A549 (cell line): ENCODE measurements at regions of chr19 and their contacts with region 1.

Region 1: DNA sequence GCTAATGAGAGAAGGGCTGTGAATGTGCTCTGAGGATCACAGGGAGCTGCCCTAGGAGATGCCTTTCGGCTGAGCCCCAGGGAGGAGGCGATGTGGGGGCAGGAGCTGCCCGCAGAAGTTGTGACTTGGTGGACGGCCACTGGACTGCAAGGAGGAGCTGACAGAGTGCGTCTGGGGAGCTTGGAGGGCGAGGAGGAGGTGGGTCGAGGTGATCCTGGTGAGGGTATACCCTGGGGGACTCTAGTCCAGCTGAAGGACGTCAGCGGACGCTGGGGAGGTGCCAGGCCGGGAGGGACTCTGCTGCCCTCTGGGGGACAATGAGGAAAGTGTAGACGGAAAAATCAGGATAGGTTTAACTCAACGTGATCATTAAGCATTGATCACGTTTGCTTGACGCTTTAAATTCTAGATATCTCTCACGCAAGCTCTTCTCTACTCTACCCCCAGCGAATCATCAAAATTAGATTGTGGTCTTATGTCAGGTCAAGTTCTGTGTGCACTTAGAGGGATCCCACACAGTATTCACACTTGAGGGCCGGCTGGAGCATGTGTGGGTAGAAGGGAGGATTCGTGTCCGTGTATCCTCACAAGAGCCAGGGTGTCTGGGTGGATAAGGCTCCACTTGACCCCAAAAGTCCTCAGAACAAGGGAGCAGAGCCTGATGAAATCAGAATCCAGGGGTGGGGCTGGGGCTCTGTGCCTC is 3.3 kb upstream of the CEACAM7 start:
- DNase-seq: peak; percentile 42 to 76
- ATAC-seq: peak; percentile 72 to 88
- H3K4me3 ChIP-seq: no peak overlapping the region
- H3K27ac ChIP-seq: no peak overlapping the region
- H3K4me1 ChIP-seq: no peaks in the 10 kb centered on the region
- CTCF ChIP-seq: peak; percentile 77
- EP300 ChIP-seq: no peak
- POLR2A ChIP-seq: no peak
- RAD21 ChIP-seq: peak; percentile 51 to 67; a peak in 4 of 5 replicates

Region 2: GRCh38 chr19:41657157-41657556 is 34.3 kb before region 1 on chr19:
- CTCF ChIA-PET with region 1: interaction called, 23 read pairs
- POLR2A ChIA-PET with region 1: no interaction called
- DNase-seq: no peak
- ATAC-seq: no peak
- H3K4me3 ChIP-seq: no peak overlapping the region
- H3K27ac ChIP-seq: no peak overlapping the region
- H3K4me1 ChIP-seq: no peaks in the 10 kb centered on the region
- CTCF ChIP-seq: no peak
- EP300 ChIP-seq: no peak
- POLR2A ChIP-seq: no peak
- RAD21 ChIP-seq: no peak

Region 3: GRCh38 chr19:41714598-41714997 is 23.2 kb after region 1 on chr19:
- CTCF ChIA-PET with region 1: interaction called, 358 read pairs
- POLR2A ChIA-PET with region 1: no interaction called
- DNase-seq: no peak
- ATAC-seq: no peak
- H3K4me3 ChIP-seq: no peak overlapping the region
- H3K27ac ChIP-seq: no peak overlapping the region
- H3K4me1 ChIP-seq: no peaks in the 10 kb centered on the region
- CTCF ChIP-seq: no peak
- EP300 ChIP-seq: no peak
- POLR2A ChIP-seq: no peak
- RAD21 ChIP-seq: no peak

Region 4: DNA sequence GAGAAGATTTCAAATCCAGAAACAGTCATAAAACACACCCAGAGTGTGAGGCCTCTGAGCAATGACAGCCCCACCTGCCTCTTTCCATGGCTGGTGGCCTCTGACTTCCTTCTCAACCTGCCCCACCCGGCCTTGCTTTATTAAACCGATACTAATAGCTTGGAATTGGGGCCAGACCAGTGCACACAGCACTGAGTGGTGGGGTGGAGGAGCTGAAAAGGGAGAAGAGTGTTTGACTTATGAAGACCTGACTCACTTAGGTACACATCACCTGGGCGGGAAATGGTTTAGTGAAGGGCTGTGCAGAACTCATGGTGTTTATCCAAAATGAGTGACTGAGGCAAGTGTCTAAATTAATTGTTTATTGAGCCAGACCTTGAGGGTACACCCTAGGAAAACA is 43.2 kb after region 1 on chr19:
- CTCF ChIA-PET with region 1: interaction called, 10 read pairs
- POLR2A ChIA-PET with region 1: no interaction called
- DNase-seq: no peak
- ATAC-seq: peak in 1 of 2 experiments; percentile 26; a peak in 2 of 6 replicates
- H3K4me3 ChIP-seq: no peak overlapping the region
- H3K27ac ChIP-seq: no peak overlapping the region
- H3K4me1 ChIP-seq: no peaks in the 10 kb centered on the region
- CTCF ChIP-seq: no peak
- EP300 ChIP-seq: no peak
- POLR2A ChIP-seq: no peak
- RAD21 ChIP-seq: no peak